ENCODE measurements at regions of chr12 and their contacts with region 1.

Region 1: GRCh38 chr12:17763366-17763765 is 326.6 kb downstream of the RERGL start:
- DNase-seq: no peak
- ATAC-seq: no peak

Region 2: DNA sequence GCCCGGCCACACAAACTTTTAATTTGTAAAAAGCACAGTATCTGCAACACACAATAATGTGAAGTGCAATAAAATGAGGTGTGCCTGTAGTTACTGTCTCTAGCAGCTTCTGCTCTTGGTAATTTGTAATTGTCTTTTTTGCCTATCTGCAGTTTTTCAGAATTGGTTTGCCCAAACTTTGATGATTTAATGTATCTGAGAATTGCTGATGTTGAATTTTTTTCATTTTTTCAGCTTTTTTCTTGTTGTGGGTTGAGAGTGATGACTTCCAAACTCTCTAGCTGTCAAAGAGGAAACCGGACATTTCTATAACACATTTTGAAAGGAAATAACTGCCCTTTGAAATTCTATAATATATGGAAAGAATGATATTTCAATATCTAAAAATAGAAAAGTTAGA is 89.7 kb after region 1 on chr12:
- intact Hi-C with region 1: loop called in 1 of 2 experiments (anchors 5 kb)
- DNase-seq: no peak
- ATAC-seq: no peak